ENCODE measurements at regions of chr1 and their contacts with region 1.

Region 1: DNA sequence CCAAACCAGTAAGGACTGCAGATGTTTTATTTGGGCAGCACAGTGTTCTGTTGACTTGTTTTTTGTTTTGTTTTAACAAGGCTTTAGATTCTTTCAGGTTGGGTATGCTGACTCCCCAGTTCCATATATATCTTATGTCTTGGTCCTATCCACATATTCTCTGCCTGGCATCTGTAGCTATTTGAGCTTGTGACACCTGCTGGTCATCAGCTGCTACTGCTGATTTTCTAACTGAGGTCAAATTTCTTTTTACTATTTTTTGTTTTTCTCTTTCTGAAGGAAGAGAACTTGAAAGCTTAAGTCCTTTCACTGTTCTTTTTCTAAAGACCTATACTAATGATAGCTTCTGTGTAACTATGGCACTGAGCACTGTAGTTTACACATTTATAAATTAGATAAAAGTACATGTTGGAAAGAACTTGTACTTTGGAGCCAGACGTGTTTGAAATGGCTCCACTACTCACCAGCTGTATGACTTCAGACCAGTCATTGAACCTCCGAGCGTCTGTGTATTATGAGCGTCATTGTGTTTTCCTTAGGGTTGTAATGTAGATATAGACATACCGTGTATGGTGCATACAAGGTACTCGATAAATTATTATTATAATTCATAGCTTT is 109.4 kb downstream of the NRDC start:
- DNase-seq: peak; percentile 61
- H3K4me3 Mint-ChIP-seq: no peak overlapping the region
- H3K27ac Mint-ChIP-seq: peak overlapping the region; percentile 66
- H3K4me1 Mint-ChIP-seq: peaks cover 8% of the 10 kb centered on the region
- H3K27me3 Mint-ChIP-seq: no peaks in the 10 kb centered on the region
- CTCF ChIP-seq: peak; percentile 72

Region 2: GRCh38 chr1:51494138-51494830 is 274.8 kb before region 1 on chr1:
- CTCF ChIA-PET with region 1: no interaction called
- POLR2A ChIA-PET with region 1: no interaction called
- intact Hi-C with region 1: no loop called
- DNase-seq: no peak
- H3K4me3 Mint-ChIP-seq: no peak overlapping the region
- H3K27ac Mint-ChIP-seq: no peak overlapping the region
- H3K4me1 Mint-ChIP-seq: peaks cover 28% of the 10 kb centered on the region
- H3K27me3 Mint-ChIP-seq: no peaks in the 10 kb centered on the region
- CTCF ChIP-seq: no peak

Region 3: GRCh38 chr1:51616901-51617708 is 152.0 kb before region 1 on chr1 and contains the start of gene OSBPL9:
- CTCF ChIA-PET with region 1: interaction called, 13 read pairs
- POLR2A ChIA-PET with region 1: interaction called, 3 read pairs
- intact Hi-C with region 1: no loop called
- DNase-seq: peak; percentile 92
- H3K4me3 Mint-ChIP-seq: peak within 1 kb of the TSS; percentile 97
- H3K27ac Mint-ChIP-seq: peak within 1 kb of the TSS; percentile 98
- H3K4me1 Mint-ChIP-seq: peaks cover 39% of the 10 kb centered on the region
- H3K27me3 Mint-ChIP-seq: no peaks in the 10 kb centered on the region
- CTCF ChIP-seq: no peak
- total RNA-seq, gene OSBPL9: 51.7 and 60.4 TPM in 2 replicates

Region 4: GRCh38 chr1:51653127-51653526 is 116.0 kb before region 1 on chr1:
- CTCF ChIA-PET with region 1: interaction called, 10 read pairs
- POLR2A ChIA-PET with region 1: no interaction called
- intact Hi-C with region 1: loop called (anchors 1 kb)
- DNase-seq: no peak
- H3K4me3 Mint-ChIP-seq: no peak overlapping the region
- H3K27ac Mint-ChIP-seq: no peak overlapping the region
- H3K4me1 Mint-ChIP-seq: no peaks in the 10 kb centered on the region
- H3K27me3 Mint-ChIP-seq: no peaks in the 10 kb centered on the region
- CTCF ChIP-seq: no peak

Region 5: GRCh38 chr1:51729156-51729823 is 39.8 kb before region 1 on chr1:
- CTCF ChIA-PET with region 1: interaction called, 6 read pairs
- POLR2A ChIA-PET with region 1: interaction called, 4 read pairs
- intact Hi-C with region 1: loop called (anchors 1 kb)
- DNase-seq: peak; percentile 97
- H3K4me3 Mint-ChIP-seq: peak overlapping the region; percentile 98
- H3K27ac Mint-ChIP-seq: peak overlapping the region; percentile 86
- H3K4me1 Mint-ChIP-seq: peaks cover 27% of the 10 kb centered on the region
- H3K27me3 Mint-ChIP-seq: no peaks in the 10 kb centered on the region
- CTCF ChIP-seq: no peak

Region 6: DNA sequence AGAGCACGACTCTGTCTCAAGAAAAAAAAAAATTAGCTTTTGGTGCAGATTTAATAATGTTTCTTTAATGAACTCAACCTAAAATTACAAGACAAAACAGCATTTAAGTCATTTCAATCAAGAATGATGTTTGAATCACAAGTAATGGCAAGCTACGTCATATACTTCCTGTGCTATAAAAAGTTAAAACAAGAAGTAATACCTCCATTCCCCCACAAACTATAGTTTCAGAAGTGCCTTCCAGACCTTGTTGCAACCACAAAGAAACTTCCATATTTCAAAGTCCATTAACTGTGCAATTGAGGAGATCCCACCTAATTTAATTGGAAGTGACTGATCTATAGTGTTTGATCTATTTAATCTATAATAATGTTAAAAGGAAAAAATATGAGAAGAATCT is 94.3 kb after region 1 on chr1:
- CTCF ChIA-PET with region 1: no interaction called
- POLR2A ChIA-PET with region 1: no interaction called
- intact Hi-C with region 1: no loop called
- DNase-seq: no peak
- H3K4me3 Mint-ChIP-seq: no peak overlapping the region
- H3K27ac Mint-ChIP-seq: no peak overlapping the region
- H3K4me1 Mint-ChIP-seq: peaks cover 17% of the 10 kb centered on the region
- H3K27me3 Mint-ChIP-seq: no peaks in the 10 kb centered on the region
- CTCF ChIP-seq: no peak

Measured in MCF 10A (cell line).